ENCODE measurements at regions of chr6 and their contacts with region 1.

Region 1: DNA sequence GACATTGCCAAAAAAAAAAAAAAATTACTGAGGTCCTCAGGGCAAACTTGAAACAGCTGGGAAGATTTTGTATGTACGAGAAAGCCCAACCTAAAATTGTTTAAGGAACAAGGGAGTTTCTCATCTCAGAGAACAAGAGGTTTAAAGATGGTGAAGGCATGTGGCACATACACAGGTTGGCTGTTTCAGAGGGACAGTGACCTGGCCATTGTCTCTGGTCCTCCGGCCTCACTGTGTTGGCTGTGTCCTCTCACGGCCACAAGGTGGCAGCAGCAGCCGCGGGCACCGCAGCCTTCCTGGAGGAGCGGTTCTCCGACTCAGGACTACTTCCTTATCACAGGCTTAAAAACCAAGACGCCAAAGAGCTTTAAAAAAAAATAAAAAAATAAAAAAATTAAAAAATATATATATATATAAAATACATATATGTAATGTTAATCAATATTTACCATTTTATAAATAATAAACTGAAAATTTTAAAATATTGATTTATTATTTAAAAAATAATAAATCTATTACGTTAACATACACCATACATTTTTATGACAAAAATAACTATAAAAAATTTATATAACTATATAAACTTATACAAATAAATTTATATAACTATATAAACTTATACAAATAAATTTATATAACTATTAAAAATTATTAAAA is 52.8 kb downstream of the GTF2H5 start:
- DNase-seq: peak; percentile 51 to 80
- ATAC-seq: peak; percentile 98 to 99
- H3K4me3 ChIP-seq: no peak overlapping the region
- H3K27ac ChIP-seq: no peak overlapping the region; a peak in 2 of 6 replicates
- H3K4me1 ChIP-seq: peaks cover 10% of the 10 kb centered on the region; the same call in 2 of the 3 replicates
- CTCF ChIP-seq: peak; percentile 89
- EP300 ChIP-seq: no peak
- POLR2A ChIP-seq: no peak
- RAD21 ChIP-seq: peak; percentile 90 to 92

Region 2: GRCh38 chr6:158231551-158232315 is 10.8 kb after region 1 on chr6:
- CTCF ChIA-PET with region 1: interaction called, 13 read pairs
- POLR2A ChIA-PET with region 1: no interaction called
- DNase-seq: peak; percentile 51 to 75
- ATAC-seq: peak; percentile 88 to 90
- H3K4me3 ChIP-seq: peak overlapping the region; percentile 96
- H3K27ac ChIP-seq: peak overlapping the region; percentile 100
- H3K4me1 ChIP-seq: peaks cover 16% of the 10 kb centered on the region; the same call in 2 of the 3 replicates
- CTCF ChIP-seq: no peak
- EP300 ChIP-seq: no peak
- POLR2A ChIP-seq: peak; percentile 15
- RAD21 ChIP-seq: no peak

Region 3: DNA sequence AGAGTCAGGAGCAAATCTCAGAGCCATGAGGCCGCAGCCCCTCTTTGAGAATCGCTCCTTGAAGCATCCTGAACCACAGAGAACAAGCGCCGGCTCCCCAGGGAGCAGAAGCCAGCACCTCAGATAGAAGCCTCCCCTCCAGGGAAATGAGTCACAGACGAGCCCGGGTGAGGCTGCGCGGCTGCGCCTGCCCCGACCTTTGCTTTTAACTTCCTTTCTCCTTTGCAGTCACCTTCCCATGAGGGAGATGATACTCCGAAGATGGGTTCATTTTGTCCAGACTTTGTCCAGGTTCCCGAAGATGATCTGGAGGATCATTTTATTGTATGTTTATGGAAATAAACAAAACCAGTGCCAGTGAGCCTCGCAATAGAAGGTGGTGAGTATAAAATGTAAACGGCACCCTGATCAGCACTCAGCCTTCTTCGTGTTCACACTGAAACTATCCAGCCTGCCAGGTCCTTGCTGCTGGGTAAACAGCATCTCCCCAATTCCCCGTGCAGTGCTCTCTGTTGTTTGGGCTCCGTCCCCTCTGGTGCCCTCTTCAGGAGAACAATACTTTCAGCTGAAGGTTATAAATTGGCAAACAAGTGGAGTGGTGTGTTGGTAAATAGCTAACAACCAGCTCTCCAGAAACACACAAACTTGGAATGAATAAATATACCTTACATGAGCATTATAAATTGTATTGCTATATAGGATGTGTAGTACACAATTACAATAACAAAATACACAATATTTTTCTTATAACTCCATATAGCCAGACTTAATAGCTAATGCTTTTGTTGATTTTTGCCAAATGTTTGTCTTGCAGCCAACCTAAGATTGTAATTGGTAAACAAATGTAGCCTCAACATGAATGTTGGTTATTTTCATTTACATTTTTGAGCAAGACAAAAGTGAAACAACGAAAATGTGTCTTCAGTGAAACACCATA is 297.5 kb after region 1 on chr6:
- CTCF ChIA-PET with region 1: interaction called, 13 read pairs
- POLR2A ChIA-PET with region 1: no interaction called
- DNase-seq: peak; percentile 70 to 72
- ATAC-seq: peak; percentile 92 to 95
- H3K4me3 ChIP-seq: peak overlapping the region; percentile 43
- H3K27ac ChIP-seq: peak overlapping the region; percentile 62 to 69
- H3K4me1 ChIP-seq: peaks cover 12% of the 10 kb centered on the region; the same call in 2 of the 3 replicates
- CTCF ChIP-seq: peak; percentile 58
- EP300 ChIP-seq: no peak
- POLR2A ChIP-seq: no peak
- RAD21 ChIP-seq: peak; percentile 50 to 58

Region 4: DNA sequence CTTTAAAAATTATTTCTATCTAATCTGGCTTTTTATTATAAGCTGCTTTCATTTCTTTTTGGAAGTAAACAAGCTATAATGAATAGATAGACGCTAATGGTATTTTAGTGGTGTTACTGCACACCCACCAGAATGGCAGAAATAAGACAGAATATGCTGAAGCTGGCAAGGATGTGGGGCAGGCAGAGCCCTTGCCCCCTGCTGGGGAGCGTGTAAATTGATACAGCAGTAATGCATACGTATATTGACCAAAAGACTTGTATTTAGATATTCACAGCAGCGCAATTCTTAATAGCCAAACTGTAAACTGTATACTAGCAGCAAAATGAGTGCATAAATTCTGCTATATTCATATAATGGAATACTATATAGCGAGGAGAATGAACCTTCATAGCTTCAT is 374.3 kb after region 1 on chr6:
- CTCF ChIA-PET with region 1: interaction called, 10 read pairs
- POLR2A ChIA-PET with region 1: no interaction called
- DNase-seq: no peak
- ATAC-seq: peak in 1 of 2 experiments; percentile 46; a peak in 1 of 6 replicates
- H3K4me3 ChIP-seq: no peak overlapping the region
- H3K27ac ChIP-seq: no peak overlapping the region
- H3K4me1 ChIP-seq: no peaks in the 10 kb centered on the region
- CTCF ChIP-seq: no peak
- EP300 ChIP-seq: no peak
- POLR2A ChIP-seq: no peak
- RAD21 ChIP-seq: no peak

Region 5: GRCh38 chr6:158605266-158605878 is 384.5 kb after region 1 on chr6:
- CTCF ChIA-PET with region 1: interaction called, 34 read pairs
- POLR2A ChIA-PET with region 1: no interaction called
- DNase-seq: peak; percentile 59 to 73
- ATAC-seq: peak; percentile 81 to 92
- H3K4me3 ChIP-seq: no peak overlapping the region
- H3K27ac ChIP-seq: no peak overlapping the region
- H3K4me1 ChIP-seq: no peaks in the 10 kb centered on the region
- CTCF ChIP-seq: peak; percentile 59
- EP300 ChIP-seq: no peak
- POLR2A ChIP-seq: no peak
- RAD21 ChIP-seq: peak; percentile 55 to 58

Measured in A549 (cell line).